Aorta (tissue), 5 donors: ENCODE measurements at regions of chr7 and their contacts with region 1.

Region 1: DNA sequence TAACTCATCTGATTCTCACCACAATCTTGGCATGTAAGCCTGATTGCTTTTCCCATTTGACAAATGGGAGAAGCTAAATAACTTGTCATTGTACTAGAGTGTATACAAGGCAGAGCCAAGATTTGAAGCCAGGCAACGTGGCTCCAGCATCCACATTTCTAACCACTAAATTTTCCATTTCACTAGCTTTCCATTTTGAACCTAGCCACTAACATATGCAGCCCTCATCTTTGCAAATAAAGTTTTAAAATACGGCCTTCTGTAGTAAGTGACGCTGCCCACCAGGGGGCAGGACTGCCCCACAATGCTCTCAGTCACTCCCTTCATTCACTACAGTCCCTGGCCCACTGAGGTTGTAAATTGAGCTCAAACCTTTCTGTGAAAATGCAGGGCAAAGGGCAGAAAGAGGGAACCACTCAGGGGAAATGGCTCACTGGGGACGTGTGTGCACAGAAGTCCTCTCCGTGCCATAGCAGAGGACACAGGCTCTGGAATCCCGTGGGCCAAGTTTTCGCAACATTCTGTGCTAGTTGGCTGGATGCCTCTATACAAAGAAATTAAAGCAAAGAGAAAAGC is 315.7 kb downstream of the TNS3 start:
- DNase-seq: peak; percentile 59 to 86
- ATAC-seq: peak; percentile 92
- H3K4me3 ChIP-seq: no peak overlapping the region
- H3K27ac ChIP-seq: no peak overlapping the region
- H3K4me1 ChIP-seq: no peaks in the 10 kb centered on the region
- H3K27me3 ChIP-seq: no peaks in the 10 kb centered on the region

Region 2: GRCh38 chr7:46993396-46993795 is 272.8 kb before region 1 on chr7:
- intact Hi-C with region 1: no loop called
- DNase-seq: no peak
- ATAC-seq: no peak
- H3K4me3 ChIP-seq: no peak overlapping the region
- H3K27ac ChIP-seq: no peak overlapping the region
- H3K4me1 ChIP-seq: no peaks in the 10 kb centered on the region
- H3K27me3 ChIP-seq: no peaks in the 10 kb centered on the region

Region 3: DNA sequence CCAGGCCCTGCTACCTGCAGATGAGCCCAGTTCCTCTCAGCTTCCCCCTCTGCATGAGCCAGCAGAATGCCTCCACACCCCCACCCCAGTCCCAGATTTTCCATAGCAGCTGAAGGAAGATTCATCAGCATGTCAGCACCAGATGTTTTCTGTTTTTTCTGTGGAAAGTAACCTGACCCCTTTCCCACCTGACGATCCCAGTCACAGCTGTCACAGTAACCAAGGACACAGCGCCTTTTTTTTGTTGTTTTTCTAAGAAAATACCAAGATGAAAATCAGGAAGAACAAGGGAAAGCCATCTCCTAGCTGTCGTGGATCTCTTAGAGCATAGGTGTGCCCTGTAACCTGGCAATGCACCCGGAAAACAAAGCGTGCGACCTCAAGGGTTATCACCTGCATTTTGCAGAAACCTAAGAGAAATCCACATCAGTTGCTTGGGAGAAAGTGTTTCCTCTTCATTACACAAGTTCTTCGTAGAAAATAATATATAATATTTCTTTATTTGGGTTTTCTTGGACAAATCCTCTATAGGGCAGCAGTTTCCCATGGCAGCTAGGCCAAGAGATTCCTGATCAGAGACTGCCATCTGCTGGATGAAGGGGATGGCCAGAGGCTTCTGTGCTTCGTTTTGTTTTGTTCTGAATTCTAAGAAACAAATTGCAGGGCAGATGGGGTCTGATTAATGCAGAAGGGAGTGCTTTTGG is 86.3 kb before region 1 on chr7:
- intact Hi-C with region 1: no loop called
- DNase-seq: no peak
- ATAC-seq: peak; percentile 76
- H3K4me3 ChIP-seq: no peak overlapping the region
- H3K27ac ChIP-seq: no peak overlapping the region
- H3K4me1 ChIP-seq: peaks cover 0 to 6% of the 10 kb centered on the region in 2 donors
- H3K27me3 ChIP-seq: no peaks in the 10 kb centered on the region

Region 4: DNA sequence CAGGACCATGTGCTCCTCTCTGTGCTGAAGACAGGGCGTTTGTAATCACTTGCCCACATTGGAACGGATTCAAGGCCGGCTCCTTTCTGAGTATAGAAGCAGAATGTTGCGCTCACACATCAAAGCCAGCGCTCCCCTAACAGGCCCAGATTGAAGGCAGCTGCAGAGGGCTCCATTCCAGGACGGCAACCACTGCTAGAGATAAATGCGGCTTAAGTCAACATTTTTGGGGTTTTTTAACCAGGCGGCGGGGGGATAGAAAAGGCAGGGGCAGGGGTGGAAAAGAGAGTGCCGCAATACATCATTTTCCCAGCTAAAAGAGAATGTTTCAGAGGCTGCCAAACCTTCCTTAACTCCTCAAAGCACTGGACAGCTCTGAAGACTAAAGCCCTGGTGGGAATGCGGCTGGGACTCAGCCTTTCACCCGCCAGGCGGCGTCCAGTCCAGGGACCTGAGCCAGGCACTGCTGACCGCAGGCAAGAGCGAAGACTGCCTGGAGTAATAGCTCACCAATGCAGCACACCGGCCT is 126.1 kb after region 1 on chr7:
- intact Hi-C with region 1: loop called (anchors 5 kb)
- DNase-seq: peak; percentile 84 to 91
- ATAC-seq: peak; percentile 89
- H3K4me3 ChIP-seq: no peak overlapping the region
- H3K27ac ChIP-seq: peak overlapping the region in 1 of 2 donors; percentile 23
- H3K4me1 ChIP-seq: no peaks in the 10 kb centered on the region
- H3K27me3 ChIP-seq: no peaks in the 10 kb centered on the region

Region 5: DNA sequence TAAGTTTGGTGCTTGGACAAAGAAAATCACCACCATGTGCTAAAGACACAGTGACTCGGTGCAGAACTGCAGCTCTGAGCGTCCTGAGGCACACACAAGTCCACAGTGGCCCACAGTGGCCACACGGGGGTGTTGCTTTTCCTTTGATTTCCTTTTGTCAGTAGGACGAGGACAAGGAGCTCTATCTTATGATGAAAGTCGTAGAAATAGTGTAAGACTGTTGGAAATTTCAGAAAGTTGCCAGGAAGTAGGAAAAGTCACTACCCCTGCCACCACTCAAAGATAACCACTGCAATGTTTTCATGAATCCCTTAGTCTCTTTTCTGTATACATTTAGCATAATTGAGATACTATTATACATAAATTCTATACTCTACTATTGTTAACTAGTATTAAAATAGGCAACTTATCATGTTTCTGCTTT is 169.7 kb after region 1 on chr7:
- intact Hi-C with region 1: loop called in 1 of 2 experiments (anchors 5 kb)
- DNase-seq: peak; percentile 77 to 86
- ATAC-seq: peak; percentile 74
- H3K4me3 ChIP-seq: no peak overlapping the region
- H3K27ac ChIP-seq: no peak overlapping the region
- H3K4me1 ChIP-seq: no peaks in the 10 kb centered on the region
- H3K27me3 ChIP-seq: no peaks in the 10 kb centered on the region

Region 6: GRCh38 chr7:47818796-47819606 is 552.8 kb after region 1 on chr7:
- intact Hi-C with region 1: loop called (anchors 2 to 5 kb)
- DNase-seq: peak; percentile 78 to 90
- ATAC-seq: peak; percentile 87
- H3K4me3 ChIP-seq: no peak overlapping the region
- H3K27ac ChIP-seq: no peak overlapping the region
- H3K4me1 ChIP-seq: peaks cover 0 to 2% of the 10 kb centered on the region in 2 donors
- H3K27me3 ChIP-seq: no peaks in the 10 kb centered on the region